Activated CD8-positive, alpha-beta T cell treated with anti-CD3 and anti-CD28 coated beads for 36 hours (primary cell): ENCODE measurements at regions of chr11 and their contacts with region 1.

Region 1: DNA sequence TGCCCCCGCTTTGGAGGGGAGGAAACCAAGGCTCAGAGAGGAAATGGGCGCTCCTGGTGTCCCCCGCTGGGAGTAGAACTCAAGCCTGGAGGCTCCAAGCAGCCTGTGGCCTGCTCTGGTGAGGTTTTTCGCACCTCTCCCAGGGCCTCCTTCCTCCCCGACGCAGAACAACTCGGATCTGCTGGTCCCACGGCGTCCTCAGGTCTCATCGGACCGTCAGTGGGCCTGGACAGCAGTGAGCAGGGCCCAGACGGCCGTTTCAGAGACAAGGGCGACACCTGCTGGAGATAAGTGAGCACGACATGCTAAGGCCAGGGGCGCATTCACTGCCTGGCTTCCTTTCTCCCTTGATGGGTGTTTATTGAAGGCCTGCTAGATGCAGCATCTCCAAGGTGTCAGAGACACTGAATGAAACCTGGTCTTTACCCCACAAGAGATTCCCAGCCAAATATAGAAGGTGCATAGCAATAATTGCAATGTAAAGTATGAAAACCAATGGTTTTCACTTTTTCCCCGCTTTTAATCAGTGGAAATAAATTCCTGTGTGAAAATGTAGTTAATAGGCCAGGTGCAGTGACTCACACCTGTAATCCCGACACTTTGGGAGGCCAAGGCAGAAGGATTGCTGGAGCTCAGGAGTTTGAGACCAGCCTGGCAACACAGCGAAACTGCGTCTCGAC is 26.9 kb upstream of the CD82 start:
- DNase-seq: peak; percentile 81
- ATAC-seq: peak; percentile 97
- H3K4me3 Mint-ChIP-seq: no peak overlapping the region
- H3K27ac Mint-ChIP-seq: no peak overlapping the region
- H3K4me1 Mint-ChIP-seq: no peaks in the 10 kb centered on the region
- H3K27me3 Mint-ChIP-seq: no peaks in the 10 kb centered on the region
- CTCF ChIP-seq: peak; percentile 96

Region 2: DNA sequence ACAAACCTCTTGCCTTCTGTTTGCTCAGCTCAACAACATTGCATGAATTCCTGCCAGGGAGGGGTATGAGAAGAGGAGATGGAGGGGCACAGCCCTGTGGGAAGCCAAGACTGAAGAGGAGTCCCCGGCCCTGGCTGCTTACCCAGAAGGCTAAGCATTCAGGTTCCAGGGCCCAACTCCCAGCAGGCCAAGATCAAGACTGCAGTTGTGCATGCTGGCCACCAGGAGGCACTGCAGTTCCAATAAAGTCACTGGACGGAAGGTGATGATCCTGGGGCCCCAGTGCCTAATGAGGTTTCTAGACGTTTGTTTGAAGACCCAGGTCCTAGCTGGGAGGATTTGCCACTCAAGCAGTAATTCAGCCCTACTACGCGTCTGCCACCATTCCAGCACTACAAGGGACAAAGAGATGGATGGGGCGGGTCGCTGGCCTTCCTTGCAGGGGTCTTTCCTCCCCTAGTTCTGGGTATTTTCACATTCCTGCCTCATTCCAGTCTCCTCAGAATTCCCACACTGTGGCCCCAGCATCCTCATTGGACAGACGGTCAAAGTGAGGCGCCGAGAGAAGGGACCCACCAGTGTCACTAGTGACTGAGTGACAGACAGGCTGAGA is 252.1 kb before region 1 on chr11:
- CTCF ChIA-PET with region 1: interaction called, 26 read pairs
- POLR2A ChIA-PET with region 1: no interaction called
- intact Hi-C with region 1: loop called (anchors 5 kb)
- DNase-seq: peak; percentile 62
- ATAC-seq: peak; percentile 91
- H3K4me3 Mint-ChIP-seq: no peak overlapping the region
- H3K27ac Mint-ChIP-seq: no peak overlapping the region
- H3K4me1 Mint-ChIP-seq: no peaks in the 10 kb centered on the region
- H3K27me3 Mint-ChIP-seq: peaks cover 5% of the 10 kb centered on the region
- CTCF ChIP-seq: peak; percentile 93

Region 3: DNA sequence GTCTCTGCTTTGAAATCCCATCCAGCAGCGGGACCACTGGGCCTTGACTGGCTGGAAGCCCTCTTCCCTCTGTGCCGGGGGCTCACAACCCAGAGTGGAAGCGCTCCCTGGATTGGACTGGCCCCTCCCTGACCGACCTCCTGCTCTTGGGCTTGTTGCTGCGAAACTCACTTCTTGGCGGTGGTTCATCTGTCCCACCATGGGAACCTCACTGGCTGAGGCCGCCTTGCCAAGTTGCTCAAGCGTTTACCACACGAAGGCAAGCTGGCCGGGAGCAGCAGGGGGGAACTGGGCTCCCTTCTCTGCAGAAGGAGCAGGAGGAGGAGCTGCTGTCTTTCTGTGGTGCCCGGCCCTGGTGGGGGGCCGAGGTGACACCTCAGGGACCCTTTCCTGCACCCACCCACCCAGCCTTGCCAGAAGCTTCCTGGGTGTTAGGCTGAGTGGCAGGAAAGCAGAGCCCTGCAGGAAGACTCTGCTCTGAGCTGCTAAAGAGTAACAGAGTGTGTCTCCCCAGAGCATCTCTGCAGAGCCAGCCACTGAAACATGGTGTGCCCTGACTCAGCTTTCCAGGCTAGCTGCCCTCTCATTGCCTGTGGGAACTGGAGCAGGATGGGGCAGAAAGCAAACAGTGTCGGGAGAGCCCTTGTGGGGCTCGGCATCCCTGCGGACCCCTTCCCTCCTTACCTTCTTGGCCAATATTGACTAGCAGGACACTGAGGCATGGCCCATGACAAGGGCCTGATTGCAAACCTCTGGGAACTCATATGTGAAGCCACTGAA is 140.1 kb before region 1 on chr11:
- CTCF ChIA-PET with region 1: no interaction called
- POLR2A ChIA-PET with region 1: no interaction called
- intact Hi-C with region 1: no loop called
- DNase-seq: no peak
- ATAC-seq: no peak
- H3K4me3 Mint-ChIP-seq: no peak overlapping the region
- H3K27ac Mint-ChIP-seq: no peak overlapping the region
- H3K4me1 Mint-ChIP-seq: no peaks in the 10 kb centered on the region
- H3K27me3 Mint-ChIP-seq: peaks cover 18% of the 10 kb centered on the region
- CTCF ChIP-seq: no peak

Region 4: DNA sequence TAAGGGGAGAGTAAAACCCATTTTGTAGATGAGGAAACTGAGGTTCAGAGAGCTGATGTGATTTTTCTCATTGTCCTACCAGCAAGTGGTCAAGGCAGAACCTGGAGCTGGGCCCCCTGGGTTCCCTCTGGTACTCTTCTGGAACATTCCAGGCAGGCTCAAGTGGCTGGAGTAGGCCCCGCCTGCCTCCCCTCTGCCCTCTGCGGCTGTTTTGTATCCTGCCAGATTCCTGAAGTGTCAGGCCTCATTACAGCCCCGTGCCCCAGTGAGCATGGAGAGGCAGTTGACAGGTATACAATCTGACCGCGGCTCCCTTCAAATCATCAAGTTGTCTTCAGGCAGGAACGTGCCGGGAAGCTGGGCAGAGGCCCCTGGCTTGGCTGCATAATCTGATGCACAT is 67.7 kb before region 1 on chr11:
- CTCF ChIA-PET with region 1: no interaction called
- POLR2A ChIA-PET with region 1: no interaction called
- intact Hi-C with region 1: loop called (anchors 10 kb)
- DNase-seq: no peak
- ATAC-seq: no peak
- H3K4me3 Mint-ChIP-seq: no peak overlapping the region
- H3K27ac Mint-ChIP-seq: no peak overlapping the region
- H3K4me1 Mint-ChIP-seq: no peaks in the 10 kb centered on the region
- H3K27me3 Mint-ChIP-seq: peaks cover 22% of the 10 kb centered on the region
- CTCF ChIP-seq: no peak

Region 5: DNA sequence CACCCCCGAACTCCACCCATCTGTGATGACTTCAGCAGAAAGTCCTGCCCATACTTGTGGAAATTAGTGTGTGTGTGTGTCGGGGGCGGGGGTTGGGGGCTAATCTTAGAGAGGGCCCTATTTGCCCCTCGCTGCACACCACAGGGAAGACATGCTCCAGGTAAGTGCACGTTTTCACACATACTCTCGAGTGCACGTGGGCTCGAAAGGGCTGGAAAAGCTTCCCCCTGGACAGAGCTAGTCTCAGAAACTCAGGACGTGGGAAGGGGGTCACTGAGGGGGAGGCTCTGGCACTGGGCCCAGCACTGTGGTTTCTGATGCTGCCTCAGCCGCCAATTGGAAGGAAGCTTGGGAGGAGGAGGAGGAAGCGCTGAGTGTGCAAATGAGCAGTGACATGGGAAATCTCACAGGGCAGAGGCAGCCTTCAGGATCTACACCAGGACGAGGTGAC is 13.7 kb before region 1 on chr11:
- CTCF ChIA-PET with region 1: interaction called, 98 read pairs
- POLR2A ChIA-PET with region 1: no interaction called
- intact Hi-C with region 1: no loop called
- DNase-seq: no peak
- ATAC-seq: no peak
- H3K4me3 Mint-ChIP-seq: no peak overlapping the region
- H3K27ac Mint-ChIP-seq: no peak overlapping the region
- H3K4me1 Mint-ChIP-seq: peaks cover 8% of the 10 kb centered on the region
- H3K27me3 Mint-ChIP-seq: peaks cover 15% of the 10 kb centered on the region
- CTCF ChIP-seq: no peak